ENCODE measurements at regions of chr7 and their contacts with region 1.

Region 1: GRCh38 chr7:101294039-101294831 is 27.4 kb downstream of the IFT22 start:
- DNase-seq: no peak
- H3K4me3 ChIP-seq: no peak overlapping the region
- CTCF ChIP-seq: no peak

Region 2: GRCh38 chr7:101278461-101279292 is 15.6 kb before region 1 on chr7:
- CTCF ChIA-PET with region 1: interaction called, 67 read pairs
- POLR2A ChIA-PET with region 1: no interaction called
- DNase-seq: no peak
- H3K4me3 ChIP-seq: no peak overlapping the region
- CTCF ChIP-seq: no peak

Region 3: DNA sequence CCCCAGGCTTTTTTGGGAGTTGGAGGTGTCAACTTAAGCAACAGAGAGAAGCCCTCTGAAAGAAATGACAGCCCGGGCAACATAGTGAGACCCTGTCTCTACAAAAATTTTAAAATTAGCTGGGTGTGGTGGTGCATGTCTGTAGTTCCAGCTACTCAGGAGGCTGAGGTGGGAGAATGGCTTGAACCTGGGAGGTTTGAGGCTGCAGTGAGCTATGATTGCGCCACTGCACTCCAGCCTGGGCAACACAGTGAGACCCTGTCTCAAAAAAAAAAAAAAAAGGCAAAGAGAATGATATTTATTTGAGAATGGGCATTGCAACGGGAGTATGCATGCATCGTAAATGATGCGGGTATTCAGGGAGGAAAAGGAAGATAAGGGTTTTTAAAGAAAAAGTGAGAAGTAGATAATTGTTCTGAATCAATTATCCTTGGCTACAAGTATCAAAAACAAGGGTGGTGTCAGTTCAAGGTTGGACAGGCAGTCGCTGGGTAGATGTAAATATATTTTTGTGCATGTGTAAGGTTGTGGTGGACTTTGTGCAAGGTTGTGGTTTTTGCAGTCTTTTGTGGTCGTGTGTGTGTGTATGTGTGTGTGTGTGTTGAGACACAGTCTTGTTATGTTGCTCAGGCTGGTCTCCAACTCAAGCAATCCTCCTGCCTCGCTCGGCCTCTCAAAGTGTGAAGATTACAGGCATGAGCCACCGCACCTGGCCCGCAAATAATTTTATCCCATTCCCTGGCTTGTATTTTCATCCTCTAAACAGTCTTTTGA is 134.0 kb after region 1 on chr7:
- CTCF ChIA-PET with region 1: no interaction called
- POLR2A ChIA-PET with region 1: no interaction called
- DNase-seq: no peak
- H3K4me3 ChIP-seq: no peak overlapping the region
- CTCF ChIP-seq: no peak

Measured in AG04449 (cell line).